HCT116 (cell line): ENCODE measurements at regions of chr17 and their contacts with region 1.

Region 1: GRCh38 chr17:17496189-17497064 is at the start of gene RASD1:
- DNase-seq: no peak
- ATAC-seq: peak; percentile 92
- H3K4me3 ChIP-seq: peak within 1 kb of the TSS; percentile 45 to 52
- H3K27ac ChIP-seq: no peak within 1 kb of the TSS; the same call in 1 of the 2 replicates
- H3K4me1 ChIP-seq: peaks cover 0 to 15% of the 10 kb centered on the region in 2 experiments; a peak in 2 of 4 replicates
- H3K27me3 ChIP-seq: no peaks in the 10 kb centered on the region
- CTCF ChIP-seq: peak; percentile 68 to 75 (median 74)
- POLR2A ChIP-seq: no peak
- RAD21 ChIP-seq: peak; percentile 69
- total RNA-seq, gene RASD1: 0.30 TPM

Region 2: DNA sequence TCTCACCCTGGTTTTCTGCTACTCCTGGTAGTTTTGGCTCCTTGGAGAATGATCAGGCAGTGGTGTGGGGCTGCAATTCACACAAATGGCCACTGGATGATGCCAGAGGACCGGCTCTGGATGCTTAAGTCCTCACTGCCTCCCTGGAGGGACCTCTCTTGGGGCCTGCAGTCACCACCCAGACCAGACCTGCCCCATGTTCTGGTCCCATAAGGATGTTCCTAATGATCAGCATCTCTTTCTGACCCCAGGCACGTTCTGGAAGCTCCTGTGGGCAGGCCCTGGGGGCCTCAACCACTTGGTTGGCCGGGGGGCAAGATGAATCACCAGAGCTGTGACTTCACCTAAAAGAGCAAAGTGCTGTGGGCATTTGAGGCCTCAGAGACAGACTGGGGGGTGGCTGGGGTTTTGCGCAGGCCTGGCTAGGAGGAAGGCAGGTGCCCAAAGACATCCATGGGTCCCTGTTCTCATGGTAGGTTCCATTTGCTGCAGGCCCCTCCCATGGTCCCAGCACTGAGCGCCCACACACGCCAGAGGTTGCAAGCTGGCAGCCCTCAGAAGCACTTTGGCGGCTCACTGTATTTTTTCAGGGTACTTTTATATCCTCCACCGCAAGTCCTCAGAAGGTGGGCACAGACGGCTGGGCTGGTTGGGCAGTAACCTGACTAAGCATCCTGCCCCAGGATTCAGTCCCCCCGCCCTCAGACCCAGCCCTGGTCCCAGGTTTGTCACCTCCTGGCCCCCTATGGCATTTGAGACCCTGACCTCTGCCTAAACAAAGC is 140.1 kb before region 1 on chr17:
- CTCF ChIA-PET with region 1: interaction called, 4 read pairs
- POLR2A ChIA-PET with region 1: no interaction called
- RAD21 ChIA-PET with region 1: interaction called in 1 of 2 experiments, 3 read pairs
- intact Hi-C with region 1: loop called (anchors 1 kb)
- DNase-seq: peak; percentile 70
- ATAC-seq: peak; percentile 86
- H3K4me3 ChIP-seq: no peak overlapping the region
- H3K27ac ChIP-seq: no peak overlapping the region
- H3K4me1 ChIP-seq: peaks cover 0 to 10% of the 10 kb centered on the region in 2 experiments; a peak in 1 of 4 replicates
- H3K27me3 ChIP-seq: no peaks in the 10 kb centered on the region
- CTCF ChIP-seq: peak; percentile 96 to 100 (median 99)
- POLR2A ChIP-seq: no peak
- RAD21 ChIP-seq: peak; percentile 99

Region 3: DNA sequence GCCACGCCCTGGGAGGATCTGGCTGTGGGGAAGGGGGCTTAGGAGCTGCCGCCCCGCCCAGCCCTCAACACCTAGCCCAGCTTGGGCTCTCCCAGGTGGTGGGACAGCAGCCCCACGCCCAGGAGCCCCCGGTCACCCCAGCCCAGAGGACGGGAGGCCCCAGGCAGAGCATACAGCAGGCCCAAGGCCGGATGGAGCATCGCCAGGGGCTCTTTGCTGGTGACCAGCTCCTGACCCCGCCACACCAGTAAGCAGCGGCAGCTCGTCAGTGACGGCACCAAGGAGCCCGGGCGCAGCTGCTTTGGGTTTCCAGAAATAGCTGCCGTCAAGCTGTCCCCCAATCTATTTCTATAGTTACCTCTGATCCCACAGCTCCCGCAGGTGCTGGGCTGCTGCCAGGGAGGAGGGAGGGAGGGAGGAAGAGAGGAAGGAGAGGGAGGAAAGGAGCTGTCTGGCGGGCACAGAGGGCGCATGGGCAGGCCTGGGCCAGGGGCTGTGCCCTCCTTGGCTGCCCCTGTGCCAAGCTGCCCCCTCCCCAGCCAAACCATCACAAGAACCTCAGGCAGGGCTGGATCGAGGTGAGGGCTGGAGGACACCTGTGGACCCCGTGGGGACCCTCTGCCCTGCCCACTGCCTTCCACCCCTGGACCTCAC is 10.5 kb after region 1 on chr17:
- CTCF ChIA-PET with region 1: interaction called, 19 read pairs
- POLR2A ChIA-PET with region 1: interaction called, 3 read pairs
- RAD21 ChIA-PET with region 1: no interaction called
- intact Hi-C with region 1: no loop called
- DNase-seq: no peak
- ATAC-seq: no peak
- H3K4me3 ChIP-seq: no peak overlapping the region
- H3K27ac ChIP-seq: no peak overlapping the region
- H3K4me1 ChIP-seq: peaks cover 2 to 22% of the 10 kb centered on the region in 2 experiments; a peak in 3 of 4 replicates
- H3K27me3 ChIP-seq: no peaks in the 10 kb centered on the region
- CTCF ChIP-seq: no peak
- POLR2A ChIP-seq: no peak
- RAD21 ChIP-seq: no peak

Region 4: DNA sequence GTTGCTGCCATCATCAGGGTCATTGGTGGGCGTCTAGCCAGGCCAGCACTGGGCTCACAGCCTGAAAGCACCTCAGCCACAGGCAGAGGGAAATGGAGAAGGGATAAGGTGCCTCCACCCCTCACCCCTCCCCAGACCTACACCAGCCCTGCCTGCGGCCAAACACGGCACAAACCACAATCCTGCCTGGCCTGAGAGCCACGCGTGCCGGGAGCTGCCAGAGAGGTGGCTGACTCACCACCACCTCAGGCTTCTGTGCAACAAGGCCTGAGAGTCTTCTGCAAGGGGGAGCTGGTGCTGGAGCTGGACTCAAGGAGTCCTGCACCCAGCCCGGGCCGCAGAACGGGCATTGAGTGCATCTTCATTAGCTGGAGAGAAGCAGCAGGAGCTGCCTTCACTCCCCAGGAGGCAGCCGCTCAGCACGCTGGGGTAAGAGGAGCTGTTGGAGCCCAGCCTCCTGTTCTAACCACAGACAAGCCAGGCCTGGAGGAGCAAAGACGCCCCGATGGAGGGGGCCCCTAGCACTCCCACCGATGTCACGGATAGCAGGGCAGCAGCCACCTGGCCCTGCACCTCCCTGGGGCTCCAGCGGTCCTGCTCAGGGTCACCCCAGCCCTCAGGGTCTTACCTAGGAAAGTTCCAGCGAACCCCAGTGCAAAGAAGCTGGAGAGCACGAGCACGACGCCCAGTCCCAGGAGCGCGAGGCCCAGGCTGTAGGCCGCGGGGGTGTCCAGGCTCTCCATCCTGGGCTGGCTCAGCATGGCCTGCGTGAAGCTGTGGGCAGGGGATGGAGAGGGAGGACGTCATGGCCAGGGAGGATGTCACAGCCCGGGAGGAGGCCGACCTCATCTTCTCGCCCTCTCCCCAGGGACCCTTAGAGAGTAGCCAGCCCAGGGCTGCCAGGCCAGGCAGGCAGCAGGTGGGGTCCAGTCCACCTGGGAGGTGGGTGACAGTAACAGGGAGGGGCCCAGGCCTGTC is 15.7 kb after region 1 on chr17:
- CTCF ChIA-PET with region 1: interaction called, 19 read pairs
- POLR2A ChIA-PET with region 1: interaction called, 3 read pairs
- RAD21 ChIA-PET with region 1: no interaction called
- intact Hi-C with region 1: no loop called
- DNase-seq: no peak
- ATAC-seq: peak; percentile 84
- H3K4me3 ChIP-seq: no peak overlapping the region
- H3K27ac ChIP-seq: no peak overlapping the region
- H3K4me1 ChIP-seq: peaks cover 5 to 48% of the 10 kb centered on the region in 2 experiments; a peak in 3 of 4 replicates
- H3K27me3 ChIP-seq: no peaks in the 10 kb centered on the region
- CTCF ChIP-seq: no peak
- POLR2A ChIP-seq: no peak
- RAD21 ChIP-seq: no peak

Region 5: DNA sequence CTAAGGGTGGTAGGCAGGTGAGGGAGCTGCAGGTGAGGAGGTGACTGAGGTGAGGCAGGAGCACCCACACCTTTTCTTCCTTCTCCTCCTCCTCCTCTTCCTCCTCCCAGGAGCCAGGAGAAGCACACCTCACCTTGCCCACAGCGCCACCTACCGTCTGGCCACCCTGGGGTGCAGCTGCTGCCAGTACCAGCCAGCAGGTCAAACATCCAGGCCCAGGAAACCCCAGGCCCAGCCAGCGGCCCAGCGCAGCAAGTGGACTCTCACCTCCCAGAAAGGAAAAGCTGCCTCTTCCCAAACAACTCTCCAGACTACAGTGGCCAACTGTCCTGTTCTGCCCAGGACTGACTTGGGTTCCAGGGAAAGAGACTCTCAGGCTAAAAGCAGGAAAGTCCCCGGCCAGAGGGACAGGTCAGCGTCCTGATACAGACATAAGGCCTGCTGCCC is 72.3 kb after region 1 on chr17:
- CTCF ChIA-PET with region 1: interaction called, 20 read pairs
- POLR2A ChIA-PET with region 1: no interaction called
- RAD21 ChIA-PET with region 1: interaction called, 3 to 7 read pairs
- intact Hi-C with region 1: loop called (anchors 1 kb)
- DNase-seq: peak; percentile 10
- ATAC-seq: peak; percentile 89
- H3K4me3 ChIP-seq: no peak overlapping the region
- H3K27ac ChIP-seq: no peak overlapping the region
- H3K4me1 ChIP-seq: no peaks in the 10 kb centered on the region
- H3K27me3 ChIP-seq: no peaks in the 10 kb centered on the region
- CTCF ChIP-seq: peak; percentile 74 to 94 (median 86); a peak in 5 of 6 replicates
- POLR2A ChIP-seq: no peak
- RAD21 ChIP-seq: peak; percentile 79

Region 6: GRCh38 chr17:17641621-17642409 is 145.4 kb after region 1 on chr17:
- CTCF ChIA-PET with region 1: interaction called, 31 read pairs
- POLR2A ChIA-PET with region 1: no interaction called
- RAD21 ChIA-PET with region 1: interaction called, 8 to 9 read pairs
- intact Hi-C with region 1: loop called (anchors 1 kb)
- DNase-seq: peak; percentile 73
- ATAC-seq: peak; percentile 98
- H3K4me3 ChIP-seq: no peak overlapping the region
- H3K27ac ChIP-seq: no peak overlapping the region
- H3K4me1 ChIP-seq: peaks cover 0 to 5% of the 10 kb centered on the region in 2 experiments; a peak in 1 of 4 replicates
- H3K27me3 ChIP-seq: no peaks in the 10 kb centered on the region
- CTCF ChIP-seq: peak; percentile 83 to 93 (median 92)
- POLR2A ChIP-seq: no peak
- RAD21 ChIP-seq: peak; percentile 99

Region 7: GRCh38 chr17:17757391-17757791 is 261.0 kb after region 1 on chr17:
- CTCF ChIA-PET with region 1: no interaction called
- POLR2A ChIA-PET with region 1: no interaction called
- RAD21 ChIA-PET with region 1: no interaction called
- intact Hi-C with region 1: no loop called
- DNase-seq: no peak
- ATAC-seq: no peak
- H3K4me3 ChIP-seq: no peak overlapping the region
- H3K27ac ChIP-seq: no peak overlapping the region
- H3K4me1 ChIP-seq: peaks cover 11 to 13% of the 10 kb centered on the region in 2 experiments
- H3K27me3 ChIP-seq: no peaks in the 10 kb centered on the region
- CTCF ChIP-seq: no peak
- POLR2A ChIP-seq: no peak
- RAD21 ChIP-seq: no peak